Sigmoid colon (tissue), 7 donors: ENCODE measurements at regions of chr9 and their contacts with region 1.

Region 1: DNA sequence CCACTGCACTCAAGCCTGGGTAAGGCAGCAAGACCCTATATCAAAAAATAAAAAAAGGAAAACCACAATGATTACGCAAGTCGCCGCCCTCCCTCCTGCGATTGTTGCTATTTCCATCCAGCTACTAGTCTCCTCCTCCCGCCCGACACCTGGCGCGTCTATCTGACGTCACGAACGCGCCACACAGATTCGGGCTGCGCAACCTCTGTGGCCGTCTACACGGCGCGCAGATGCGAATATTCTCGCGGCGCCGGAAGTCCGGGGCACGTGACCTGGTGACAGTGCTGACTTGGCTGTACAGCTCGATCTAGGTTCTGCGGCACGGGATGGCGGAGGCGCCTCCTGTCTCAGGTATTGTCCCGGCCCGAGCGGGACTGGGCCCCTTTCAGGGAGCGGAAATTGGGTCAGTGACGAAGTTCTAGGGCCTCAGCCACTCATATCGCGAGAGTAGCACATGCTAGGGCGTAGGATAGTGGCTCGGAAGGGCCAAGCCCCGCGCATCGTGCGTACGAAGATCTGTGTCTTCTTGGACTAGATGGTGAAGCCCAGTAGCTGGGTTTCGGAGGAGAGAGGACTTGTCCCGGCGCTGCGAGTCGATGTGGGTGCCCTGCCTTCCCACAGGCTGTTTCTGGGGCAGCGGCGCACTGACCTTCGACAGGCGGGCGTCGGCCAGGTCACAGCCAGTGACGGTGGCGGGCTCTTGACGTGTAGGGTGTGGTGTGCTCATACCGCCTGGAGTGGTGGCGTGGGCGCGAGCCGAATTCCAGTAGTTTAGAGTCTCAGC is at the start of gene NFX1:
- DNase-seq: peak; percentile 99
- H3K4me3 ChIP-seq: peak within 1 kb of the TSS; percentile 64 to 94 (median 78)
- H3K27ac ChIP-seq: peak within 1 kb of the TSS; percentile 95 to 99 (median 96)
- H3K4me1 ChIP-seq: peaks cover 0 to 43% (median 38%) of the 10 kb centered on the region in 4 donors
- H3K27me3 ChIP-seq: no peaks in the 10 kb centered on the region
- CTCF ChIP-seq: no peak
- EP300 ChIP-seq: peak in 2 of 4 donors; percentile 37 to 86
- POLR2A ChIP-seq: peak; percentile 65 to 92
- total RNA-seq, gene NFX1: 34.3 to 40.7 (median 38.6) TPM

Region 2: GRCh38 chr9:32978051-32978450 is 312.4 kb before region 1 on chr9:
- intact Hi-C with region 1: no loop called
- DNase-seq: no peak
- H3K4me3 ChIP-seq: no peak overlapping the region
- H3K27ac ChIP-seq: no peak overlapping the region
- H3K4me1 ChIP-seq: no peaks in the 10 kb centered on the region
- H3K27me3 ChIP-seq: no peaks in the 10 kb centered on the region
- CTCF ChIP-seq: no peak
- EP300 ChIP-seq: no peak
- POLR2A ChIP-seq: no peak

Region 3: DNA sequence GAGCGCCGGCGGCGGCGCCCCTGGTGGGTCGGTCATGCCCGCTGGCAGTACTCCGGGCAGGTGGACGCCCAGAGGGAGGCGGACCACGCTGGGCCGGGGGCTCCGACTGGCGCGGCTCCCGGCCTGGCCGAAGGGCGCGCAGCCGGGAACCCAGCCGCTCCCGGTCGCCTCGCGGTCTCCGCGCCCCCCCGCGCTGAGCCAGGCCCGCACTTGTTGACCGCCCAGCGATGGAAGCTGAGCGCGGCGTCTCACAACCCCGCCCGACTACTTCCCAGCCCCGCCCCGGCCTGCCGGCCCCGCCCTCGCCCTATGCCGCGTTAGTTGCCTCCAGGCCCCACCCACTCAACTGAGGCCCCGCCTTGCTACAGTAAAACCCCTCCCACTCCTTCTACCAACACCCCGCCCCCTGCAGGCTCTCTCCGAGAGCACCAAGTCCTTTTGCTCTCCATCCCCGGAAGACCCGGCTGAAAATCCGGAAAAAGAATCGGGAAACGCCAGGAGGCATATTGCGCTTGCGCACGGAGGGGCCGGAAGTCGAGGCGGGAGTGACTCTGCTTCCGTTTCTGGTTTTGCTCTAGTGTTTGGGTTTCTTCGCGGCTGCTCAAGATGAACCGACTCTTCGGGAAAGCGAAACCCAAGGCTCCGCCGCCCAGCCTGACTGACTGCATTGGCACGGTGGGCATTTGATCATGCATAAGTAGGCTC is 25.8 kb before region 1 on chr9 and contains the starts of genes BAG1 and CHMP5:
- intact Hi-C with region 1: loop called (anchors 1 kb)
- DNase-seq: peak; percentile 100
- H3K4me3 ChIP-seq: peak within 1 kb of the TSS; percentile 67 to 96 (median 92)
- H3K27ac ChIP-seq: peak within 1 kb of the TSS; percentile 89 to 95 (median 94)
- H3K4me1 ChIP-seq: peaks cover 0 to 38% (median 22%) of the 10 kb centered on the region in 4 donors
- H3K27me3 ChIP-seq: no peaks in the 10 kb centered on the region
- CTCF ChIP-seq: peak in 1 of 4 experiments; percentile 28
- EP300 ChIP-seq: no peak
- POLR2A ChIP-seq: peak in 1 of 2 donors; percentile 25
- total RNA-seq, gene BAG1: 93.3 to 164 (median 135) TPM
- total RNA-seq, gene CHMP5: 54.6 to 79.6 (median 64.3) TPM

Region 4: GRCh38 chr9:33329117-33329563 is 38.7 kb after region 1 on chr9:
- intact Hi-C with region 1: loop called (anchors 1 kb)
- DNase-seq: peak; percentile 91
- H3K4me3 ChIP-seq: no peak overlapping the region
- H3K27ac ChIP-seq: peak overlapping the region; percentile 66 to 86 (median 80)
- H3K4me1 ChIP-seq: peaks cover 0 to 34% (median 27%) of the 10 kb centered on the region in 4 donors
- H3K27me3 ChIP-seq: no peaks in the 10 kb centered on the region
- CTCF ChIP-seq: no peak
- EP300 ChIP-seq: peak; percentile 60 to 91 (median 86)
- POLR2A ChIP-seq: no peak

Region 5: GRCh38 chr9:33452828-33453271 is 162.4 kb after region 1 on chr9:
- intact Hi-C with region 1: no loop called
- DNase-seq: no peak
- H3K4me3 ChIP-seq: no peak overlapping the region
- H3K27ac ChIP-seq: no peak overlapping the region
- H3K4me1 ChIP-seq: peaks cover 0 to 2% (median 2%) of the 10 kb centered on the region in 4 donors
- H3K27me3 ChIP-seq: no peaks in the 10 kb centered on the region
- CTCF ChIP-seq: peak in 1 of 4 experiments; percentile 21
- EP300 ChIP-seq: no peak
- POLR2A ChIP-seq: no peak

Region 6: DNA sequence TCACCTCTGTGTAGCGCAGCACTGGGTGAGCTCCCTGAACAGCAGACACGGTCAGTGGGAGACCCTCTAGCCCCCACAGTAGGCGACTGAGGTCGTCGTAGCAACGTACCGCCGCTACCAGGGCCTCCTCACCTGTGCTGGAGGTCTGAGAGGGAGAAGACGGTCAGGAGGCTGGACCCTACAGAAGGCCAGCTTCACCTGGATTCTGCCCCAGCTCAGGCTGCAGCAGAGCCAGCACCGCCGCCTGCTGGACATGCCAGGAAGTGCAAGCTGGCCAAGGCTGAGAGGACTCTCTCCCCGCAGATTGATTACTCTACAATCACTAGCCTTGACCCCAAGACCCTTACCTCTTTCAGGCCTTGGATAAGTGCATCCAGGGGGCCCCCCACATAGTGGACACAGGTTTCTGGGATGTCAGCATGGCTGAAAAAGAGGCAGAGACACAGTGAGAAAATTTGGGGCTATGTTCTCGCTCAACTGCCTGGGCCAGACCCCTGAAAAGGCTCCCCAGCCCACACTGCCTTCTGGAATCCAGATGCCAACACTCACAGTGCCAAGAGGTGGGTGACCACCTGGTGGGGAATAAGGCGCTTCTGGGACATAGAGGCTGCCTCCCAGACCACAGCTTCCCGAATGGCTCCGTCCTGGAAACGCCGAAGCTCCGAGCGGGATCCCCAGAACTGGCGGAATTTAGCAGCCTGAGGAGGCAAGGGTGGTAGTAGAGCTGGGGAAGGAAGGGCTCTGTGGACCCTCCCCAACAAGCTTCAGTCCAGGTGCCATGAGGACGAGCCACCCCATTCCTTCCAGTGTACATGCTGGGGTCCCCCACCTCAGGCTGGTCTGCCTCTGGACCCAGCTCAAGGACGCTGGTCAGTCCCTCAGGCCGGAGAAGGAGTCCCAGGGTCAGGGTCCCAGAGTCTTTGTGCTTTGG is 176.4 kb after region 1 on chr9:
- intact Hi-C with region 1: loop called (anchors 5 kb)
- DNase-seq: peak; percentile 76
- H3K4me3 ChIP-seq: no peak overlapping the region
- H3K27ac ChIP-seq: no peak overlapping the region
- H3K4me1 ChIP-seq: peaks cover 0 to 3% (median 1%) of the 10 kb centered on the region in 4 donors
- H3K27me3 ChIP-seq: no peaks in the 10 kb centered on the region
- CTCF ChIP-seq: peak; percentile 83 to 94 (median 88)
- EP300 ChIP-seq: no peak
- POLR2A ChIP-seq: no peak